ENCODE measurements at regions of chr7 and their contacts with region 1.

Region 1: DNA sequence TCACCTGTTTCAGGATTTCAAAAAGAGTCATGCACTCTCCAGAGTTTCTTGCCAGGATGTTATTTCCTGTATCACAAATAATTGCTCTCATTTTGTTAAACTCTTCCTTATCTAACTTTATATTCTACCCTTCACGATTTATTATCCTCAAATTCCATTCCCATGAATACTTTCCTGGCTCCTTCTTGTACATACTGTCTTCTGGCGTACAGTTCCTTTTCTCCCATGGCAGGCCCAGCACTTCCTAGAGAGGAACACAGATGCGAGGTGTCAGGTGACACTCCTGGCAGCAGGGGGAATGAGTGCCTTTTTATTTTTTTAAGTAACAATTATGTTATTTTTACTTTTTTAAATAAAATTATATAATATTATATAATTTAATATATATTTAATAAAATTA is 411.9 kb downstream of the TFEC start:
- DNase-seq: no peak
- H3K4me3 ChIP-seq: no peak overlapping the region
- H3K27ac ChIP-seq: no peak overlapping the region
- H3K4me1 ChIP-seq: no peaks in the 10 kb centered on the region
- H3K27me3 ChIP-seq: no peaks in the 10 kb centered on the region
- CTCF ChIP-seq: no peak
- POLR2A ChIP-seq: no peak

Region 2: DNA sequence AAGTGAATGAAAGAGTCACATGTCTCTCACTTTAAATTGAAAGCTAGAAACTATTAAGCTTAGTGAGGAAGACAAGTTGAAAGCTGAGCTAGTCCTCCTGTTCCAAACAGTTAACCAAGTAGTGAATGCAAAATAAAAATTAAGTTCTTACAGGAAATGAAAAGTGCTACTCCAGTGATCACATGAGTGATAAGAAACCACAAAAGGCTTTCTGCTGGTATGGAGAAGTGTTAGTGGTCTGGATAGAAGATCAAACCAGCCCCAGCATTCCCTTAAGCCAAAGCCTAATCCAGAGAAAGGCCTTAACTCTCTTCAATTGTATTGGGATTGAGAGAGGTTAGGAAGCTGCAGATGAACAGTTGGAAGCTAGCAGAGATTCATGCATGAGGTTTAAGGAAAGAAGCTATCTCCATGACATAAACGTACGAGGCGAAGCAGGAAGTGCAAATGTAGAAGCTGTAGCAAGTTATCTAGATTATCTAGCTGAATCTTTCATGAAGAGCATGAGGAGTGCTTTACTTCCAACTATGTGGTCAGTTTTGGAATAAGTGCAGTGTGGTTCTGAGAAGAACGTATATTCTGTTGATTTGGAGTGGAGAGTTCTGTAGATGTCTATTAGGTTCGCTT is 435.1 kb before region 1 on chr7:
- intact Hi-C with region 1: loop called in 1 of 2 experiments (anchors 5 kb)
- DNase-seq: no peak
- H3K4me3 ChIP-seq: no peak overlapping the region
- H3K27ac ChIP-seq: no peak overlapping the region
- H3K4me1 ChIP-seq: no peaks in the 10 kb centered on the region
- H3K27me3 ChIP-seq: no peaks in the 10 kb centered on the region
- CTCF ChIP-seq: no peak
- POLR2A ChIP-seq: no peak

Region 3: DNA sequence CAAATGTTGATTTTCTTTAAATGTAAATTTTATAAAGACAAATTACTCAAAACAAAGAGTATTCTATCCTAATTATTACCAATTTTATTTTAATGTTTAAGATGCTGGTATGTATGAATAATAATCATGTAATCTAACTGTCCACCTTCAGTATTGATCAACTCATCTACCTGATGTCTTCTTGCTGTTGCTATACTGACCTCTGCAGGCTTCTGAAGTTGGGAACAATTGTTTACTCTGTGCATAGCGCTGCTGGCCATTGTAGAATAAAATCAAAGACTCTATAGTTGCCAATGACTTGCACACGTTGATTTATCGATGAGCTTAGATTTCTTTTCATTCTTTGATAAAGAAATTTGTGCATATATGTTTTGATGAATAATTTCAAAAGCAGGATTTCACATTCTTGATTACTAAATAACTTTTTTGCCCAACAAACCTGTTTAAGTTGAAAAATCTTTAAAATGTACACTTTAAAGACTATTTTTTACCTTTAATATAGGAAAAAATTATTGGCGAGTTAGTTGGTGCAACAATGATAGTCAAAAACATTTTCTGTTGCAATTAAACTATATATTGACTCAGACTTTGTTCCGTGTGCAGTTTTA is 129.6 kb after region 1 on chr7:
- intact Hi-C with region 1: no loop called
- DNase-seq: no peak
- H3K4me3 ChIP-seq: no peak overlapping the region
- H3K27ac ChIP-seq: no peak overlapping the region
- H3K4me1 ChIP-seq: no peaks in the 10 kb centered on the region
- H3K27me3 ChIP-seq: no peaks in the 10 kb centered on the region
- CTCF ChIP-seq: no peak
- POLR2A ChIP-seq: no peak